ENCODE measurements at regions of chr6 and their contacts with region 1.

Region 1: GRCh38 chr6:35786810-35787209 is 6.0 kb downstream of the CLPSL1 start:
- DNase-seq: no peak
- ATAC-seq: peak in 2 of 8 donors; percentile 22 to 35
- H3K4me3 ChIP-seq: peak overlapping the region in 1 of 10 donors; percentile 3
- H3K27ac ChIP-seq: no peak overlapping the region
- H3K4me1 ChIP-seq: peaks cover 0 to 4% (median 0%) of the 10 kb centered on the region in 9 donors
- H3K27me3 ChIP-seq: peaks cover 24 to 84% (median 69%) of the 10 kb centered on the region in 7 donors
- CTCF ChIP-seq: no peak

Region 2: GRCh38 chr6:35731736-35732532 is 54.9 kb before region 1 on chr6:
- intact Hi-C with region 1: no loop called
- DNase-seq: peak; percentile 95 to 98
- ATAC-seq: peak; percentile 60 to 86 (median 77)
- H3K4me3 ChIP-seq: peak overlapping the region; percentile 42 to 96 (median 84)
- H3K27ac ChIP-seq: peak overlapping the region; percentile 98 to 100 (median 100)
- H3K4me1 ChIP-seq: peaks cover 21 to 80% (median 56%) of the 10 kb centered on the region in 9 donors
- H3K27me3 ChIP-seq: no peaks in the 10 kb centered on the region
- CTCF ChIP-seq: peak in 5 of 9 donors; percentile 9 to 47 (median 21)

Region 3: DNA sequence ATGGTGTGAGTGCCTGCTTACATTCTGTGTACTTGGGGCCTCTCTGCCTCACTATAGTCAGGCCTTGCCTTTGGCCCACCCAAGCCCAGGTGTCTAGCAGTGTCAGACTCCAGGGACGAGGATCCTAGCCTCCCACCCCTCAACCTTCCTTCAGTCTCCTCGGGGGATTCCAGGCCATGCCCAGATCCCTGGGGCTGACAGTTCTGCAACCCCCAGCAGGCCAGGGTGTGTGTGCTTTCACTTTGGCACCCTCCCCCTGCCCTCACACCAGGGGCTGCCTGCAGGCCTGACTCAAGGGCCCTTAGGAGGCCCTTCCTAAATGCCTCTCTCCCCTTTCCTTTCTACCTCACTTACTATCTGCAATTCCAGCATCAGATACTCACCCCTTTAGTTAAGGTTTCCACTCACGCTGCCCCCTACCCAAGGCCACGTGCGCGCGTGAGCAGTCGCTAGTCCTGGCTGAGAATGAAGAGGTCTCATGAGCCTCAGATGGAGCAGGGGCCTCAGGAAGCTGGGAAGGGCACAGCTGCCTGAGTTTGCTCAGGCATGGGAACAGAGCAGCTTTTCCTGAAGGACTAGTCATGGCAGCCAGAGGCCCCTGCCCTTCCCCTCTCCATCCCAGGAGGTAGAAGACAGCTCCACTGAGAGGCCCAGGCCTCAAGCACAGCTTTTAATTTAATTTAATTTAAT is 11.2 kb after region 1 on chr6:
- intact Hi-C with region 1: loop called in 3 of 10 experiments (anchors 1 kb)
- DNase-seq: no peak
- ATAC-seq: peak in 1 of 8 donors; percentile 40
- H3K4me3 ChIP-seq: no peak overlapping the region
- H3K27ac ChIP-seq: no peak overlapping the region
- H3K4me1 ChIP-seq: no peaks in the 10 kb centered on the region
- H3K27me3 ChIP-seq: peaks cover 0 to 22% (median 3%) of the 10 kb centered on the region in 7 donors
- CTCF ChIP-seq: no peak

Measured in heart right ventricle (tissue), 16 donors.